Activated naive CD4-positive, alpha-beta T cell treated with anti-CD3 and anti-CD28 coated beads for 36 hours (primary cell): ENCODE measurements at regions of chr5 and their contacts with region 1.

Region 1: GRCh38 chr5:54895816-54896341 is 89.5 kb downstream of the ESM1 start:
- DNase-seq: peak; percentile 37
- H3K4me3 Mint-ChIP-seq: no peak overlapping the region
- H3K27ac Mint-ChIP-seq: no peak overlapping the region
- H3K4me1 Mint-ChIP-seq: peaks cover 5% of the 10 kb centered on the region
- H3K27me3 Mint-ChIP-seq: peaks cover 36% of the 10 kb centered on the region

Region 2: DNA sequence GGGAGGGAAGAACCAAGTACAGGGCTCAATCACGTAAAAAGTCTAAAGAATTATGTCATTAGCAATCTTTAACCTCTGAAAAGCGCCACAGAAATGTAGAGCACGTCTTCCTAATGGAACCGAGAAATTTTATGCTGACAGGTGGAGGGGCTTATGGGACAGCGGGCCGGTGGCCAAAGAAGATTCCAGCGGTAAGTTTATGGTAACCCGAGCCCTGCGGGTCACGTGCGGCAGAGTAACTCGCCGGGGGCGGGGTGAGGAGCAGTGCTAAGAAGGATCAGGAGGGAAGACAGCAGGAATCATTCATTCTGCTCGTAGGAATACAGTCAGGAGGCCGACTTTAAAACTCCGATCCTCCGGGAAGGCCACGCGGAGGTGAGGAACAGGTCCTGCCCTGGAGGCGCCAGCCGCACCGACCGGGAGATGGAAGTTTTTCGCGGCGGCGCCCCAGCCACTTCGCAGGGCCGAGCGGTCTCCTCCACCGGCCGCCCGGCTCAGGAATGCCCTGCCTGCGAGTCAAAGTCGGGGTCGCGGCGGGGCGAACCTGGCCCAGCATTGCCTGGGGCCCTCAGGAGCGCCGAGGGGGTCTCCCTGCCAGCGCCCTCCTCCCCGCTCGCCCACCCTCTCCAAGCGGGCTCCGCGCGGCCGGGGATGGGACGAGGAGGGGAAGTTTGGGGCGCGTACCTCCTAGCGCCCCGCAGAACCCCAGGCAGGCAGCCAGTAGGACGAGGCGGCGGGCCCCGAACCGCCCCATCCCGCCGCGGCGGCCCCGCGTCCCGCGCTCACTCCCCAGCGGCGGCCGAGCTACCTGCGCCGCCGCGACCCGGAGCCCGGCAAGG is 12.3 kb before region 1 on chr5:
- CTCF ChIA-PET with region 1: interaction called, 5 read pairs
- intact Hi-C with region 1: loop called (anchors 2 kb)
- DNase-seq: no peak
- H3K4me3 Mint-ChIP-seq: peak overlapping the region; percentile 71
- H3K27ac Mint-ChIP-seq: no peak overlapping the region
- H3K4me1 Mint-ChIP-seq: peaks cover 10% of the 10 kb centered on the region
- H3K27me3 Mint-ChIP-seq: peaks cover 57% of the 10 kb centered on the region